GM12878 (cell line): ENCODE measurements at regions of chr20 and their contacts with region 1.

Region 1: GRCh38 chr20:44683263-44684046 is 31.7 kb upstream of the CCN5 start:
- DNase-seq: peak; percentile 45
- ATAC-seq: peak; percentile 96
- H3K4me3 ChIP-seq: no peak overlapping the region
- H3K27ac ChIP-seq: no peak overlapping the region
- H3K4me1 ChIP-seq: peaks cover 6% of the 10 kb centered on the region
- H3K27me3 ChIP-seq: no peaks in the 10 kb centered on the region
- CTCF ChIP-seq: peak; percentile 78 to 91 (median 79); a peak in 5 of 6 replicates
- EP300 ChIP-seq: no peak
- POLR2A ChIP-seq: no peak
- RAD21 ChIP-seq: peak; percentile 92

Region 2: DNA sequence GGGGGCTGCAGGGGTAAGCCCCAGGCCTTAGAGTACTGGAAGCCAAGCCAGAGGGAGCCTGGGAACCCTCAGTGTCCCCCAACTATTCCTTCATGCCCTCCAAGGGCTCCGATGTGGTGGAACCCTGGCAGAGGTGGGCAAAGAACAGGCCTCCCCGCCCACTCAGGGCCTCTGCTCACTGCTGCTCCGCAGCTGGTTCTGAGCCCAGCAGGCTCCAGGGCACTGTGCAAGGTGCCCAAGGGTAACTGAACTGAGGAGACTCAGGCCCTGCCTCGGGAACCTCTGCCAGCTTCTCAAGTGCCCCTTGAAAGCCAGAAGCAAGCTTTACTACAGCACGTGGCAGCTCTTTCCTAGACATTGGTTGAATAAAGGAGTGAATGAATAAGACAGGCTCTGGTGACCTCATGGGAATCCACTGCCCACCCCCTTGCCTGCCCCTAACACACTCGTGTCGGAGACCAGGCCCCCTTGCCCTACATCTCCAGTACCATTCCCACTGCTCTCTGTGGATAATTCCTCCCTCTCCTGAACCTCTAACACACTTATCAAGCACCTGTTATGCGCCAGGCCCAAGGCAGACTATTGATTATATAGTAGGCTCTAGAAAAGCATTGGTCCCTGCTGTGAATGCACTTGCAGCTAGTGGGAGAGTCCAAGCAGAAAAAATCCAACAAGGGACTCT is 713.8 kb before region 1 on chr20:
- CTCF ChIA-PET with region 1: no interaction called
- POLR2A ChIA-PET with region 1: no interaction called
- RAD21 ChIA-PET with region 1: no interaction called
- SMC1A ChIA-PET with region 1: no interaction called
- in situ Hi-C with region 1: no loop called
- intact Hi-C with region 1: no loop called
- DNase-seq: no peak
- ATAC-seq: no peak
- H3K4me3 ChIP-seq: no peak overlapping the region
- H3K27ac ChIP-seq: no peak overlapping the region
- H3K4me1 ChIP-seq: peaks cover 3% of the 10 kb centered on the region
- H3K27me3 ChIP-seq: no peaks in the 10 kb centered on the region
- CTCF ChIP-seq: no peak
- EP300 ChIP-seq: no peak
- POLR2A ChIP-seq: no peak
- RAD21 ChIP-seq: no peak

Region 3: GRCh38 chr20:44475694-44476560 is 207.5 kb before region 1 on chr20 and contains the start of gene TTPAL:
- CTCF ChIA-PET with region 1: interaction called, 11 read pairs
- POLR2A ChIA-PET with region 1: no interaction called
- RAD21 ChIA-PET with region 1: interaction called, 5 read pairs
- SMC1A ChIA-PET with region 1: interaction called, 3 read pairs
- in situ Hi-C with region 1: no loop called
- intact Hi-C with region 1: no loop called
- DNase-seq: peak; percentile 68
- ATAC-seq: peak; percentile 97
- H3K4me3 ChIP-seq: peak within 1 kb of the TSS; percentile 75
- H3K27ac ChIP-seq: peak within 1 kb of the TSS; percentile 90
- H3K4me1 ChIP-seq: no peaks in the 10 kb centered on the region; the same call in 1 of the 2 replicates
- H3K27me3 ChIP-seq: no peaks in the 10 kb centered on the region
- CTCF ChIP-seq: peak; percentile 11 to 60 (median 17); a peak in 3 of 6 replicates
- EP300 ChIP-seq: no peak
- POLR2A ChIP-seq: peak; percentile 100
- RAD21 ChIP-seq: peak; percentile 32; the same call in 1 of the 2 replicates
- polyA plus RNA-seq, gene TTPAL: 4.0 to 4.3 TPM

Region 4: DNA sequence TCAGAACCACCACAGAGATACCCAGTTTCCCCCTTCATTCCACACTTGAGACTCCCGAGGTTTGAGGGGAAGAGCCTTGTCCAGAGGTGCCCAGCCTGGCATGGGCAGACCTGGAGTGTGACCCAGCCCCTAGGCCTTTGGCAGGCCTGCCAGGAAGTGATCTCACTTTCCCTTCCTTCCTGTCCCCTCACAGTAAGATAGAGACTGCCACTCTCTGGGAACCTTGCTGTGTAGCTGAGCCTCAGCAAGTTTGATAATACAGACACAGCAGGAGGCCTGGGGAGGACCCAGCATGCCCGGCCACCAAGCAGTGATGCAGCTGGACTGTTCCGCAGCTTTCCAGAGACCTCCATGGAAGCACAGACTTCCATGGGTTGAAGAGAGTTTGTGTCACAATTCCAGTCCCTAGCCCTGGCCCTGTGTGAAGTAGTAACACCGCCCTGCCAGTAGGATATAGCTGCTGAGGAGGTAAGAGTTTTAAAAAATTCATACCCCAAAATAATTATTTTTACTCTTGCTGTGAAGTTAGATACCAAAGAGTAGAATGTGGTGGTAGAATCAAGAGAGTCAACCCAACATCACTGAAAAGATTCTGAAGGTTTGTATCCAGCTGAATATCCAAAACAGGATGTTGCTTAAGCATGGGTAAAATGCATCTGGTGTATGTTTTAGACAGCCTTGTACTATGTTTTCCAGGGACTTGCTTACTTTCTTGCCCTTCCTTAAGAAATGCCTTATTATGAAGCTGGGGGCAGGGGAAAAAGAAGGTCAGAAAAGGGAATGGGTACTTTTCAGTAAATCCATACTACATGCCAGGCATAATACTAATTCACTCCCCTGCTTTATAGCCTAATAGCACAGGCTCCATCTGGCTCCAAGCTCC is 84.8 kb before region 1 on chr20:
- CTCF ChIA-PET with region 1: interaction called, 18 read pairs
- POLR2A ChIA-PET with region 1: no interaction called
- RAD21 ChIA-PET with region 1: interaction called, 16 read pairs
- SMC1A ChIA-PET with region 1: interaction called, 25 read pairs
- in situ Hi-C with region 1: no loop called
- intact Hi-C with region 1: no loop called
- DNase-seq: no peak
- ATAC-seq: peak; percentile 75
- H3K4me3 ChIP-seq: peak overlapping the region; percentile 28; the same call in 1 of the 2 replicates
- H3K27ac ChIP-seq: peak overlapping the region; percentile 0
- H3K4me1 ChIP-seq: peaks cover 25% of the 10 kb centered on the region
- H3K27me3 ChIP-seq: no peaks in the 10 kb centered on the region
- CTCF ChIP-seq: peak; percentile 12 to 25 (median 17); a peak in 3 of 6 replicates
- EP300 ChIP-seq: no peak
- POLR2A ChIP-seq: peak; percentile 58
- RAD21 ChIP-seq: peak; percentile 46; the same call in 1 of the 2 replicates

Region 5: DNA sequence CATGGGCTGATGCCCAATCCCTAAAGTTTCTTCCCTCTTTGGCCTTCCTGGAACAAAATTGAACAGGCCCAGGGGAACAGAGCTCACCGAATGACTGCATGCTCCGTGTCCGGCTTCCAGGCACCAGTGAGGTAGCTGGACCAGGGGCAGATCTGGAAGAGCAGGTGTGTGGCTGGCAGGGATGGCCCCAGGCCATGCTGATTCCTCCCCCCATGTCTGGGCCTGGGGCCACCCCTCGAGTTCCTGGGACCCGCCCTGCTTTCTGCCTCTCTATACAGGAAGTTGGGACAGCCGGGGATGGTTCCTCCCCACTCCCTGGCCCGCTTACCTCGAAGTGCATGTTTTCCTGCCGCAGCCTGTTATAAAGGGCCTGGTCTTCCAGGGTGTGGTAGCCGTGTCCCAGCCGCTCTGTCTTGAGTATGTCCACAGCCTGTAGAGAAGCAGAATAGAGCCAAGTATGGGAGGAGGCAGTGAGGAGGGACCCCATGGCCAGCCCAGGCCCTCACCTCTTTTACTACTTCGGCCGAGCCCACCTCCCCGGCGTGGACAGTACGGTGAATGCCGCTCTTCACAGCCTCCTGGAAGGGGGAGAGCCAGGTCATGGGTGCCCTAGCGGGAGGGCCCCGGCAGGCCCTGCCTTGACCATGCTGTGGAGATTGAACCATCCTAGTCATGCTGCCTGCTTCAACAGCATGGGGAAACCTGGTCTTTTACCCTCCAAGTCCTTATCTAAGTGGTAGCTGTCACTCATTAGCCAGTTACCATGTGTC is 60.8 kb before region 1 on chr20:
- CTCF ChIA-PET with region 1: interaction called, 57 read pairs
- POLR2A ChIA-PET with region 1: interaction called, 4 read pairs
- RAD21 ChIA-PET with region 1: interaction called, 37 read pairs
- SMC1A ChIA-PET with region 1: interaction called, 33 read pairs
- in situ Hi-C with region 1: no loop called
- intact Hi-C with region 1: no loop called
- DNase-seq: no peak
- ATAC-seq: no peak
- H3K4me3 ChIP-seq: no peak overlapping the region
- H3K27ac ChIP-seq: no peak overlapping the region
- H3K4me1 ChIP-seq: peaks cover 7% of the 10 kb centered on the region
- H3K27me3 ChIP-seq: no peaks in the 10 kb centered on the region
- CTCF ChIP-seq: no peak
- EP300 ChIP-seq: no peak
- POLR2A ChIP-seq: no peak
- RAD21 ChIP-seq: no peak

Region 6: DNA sequence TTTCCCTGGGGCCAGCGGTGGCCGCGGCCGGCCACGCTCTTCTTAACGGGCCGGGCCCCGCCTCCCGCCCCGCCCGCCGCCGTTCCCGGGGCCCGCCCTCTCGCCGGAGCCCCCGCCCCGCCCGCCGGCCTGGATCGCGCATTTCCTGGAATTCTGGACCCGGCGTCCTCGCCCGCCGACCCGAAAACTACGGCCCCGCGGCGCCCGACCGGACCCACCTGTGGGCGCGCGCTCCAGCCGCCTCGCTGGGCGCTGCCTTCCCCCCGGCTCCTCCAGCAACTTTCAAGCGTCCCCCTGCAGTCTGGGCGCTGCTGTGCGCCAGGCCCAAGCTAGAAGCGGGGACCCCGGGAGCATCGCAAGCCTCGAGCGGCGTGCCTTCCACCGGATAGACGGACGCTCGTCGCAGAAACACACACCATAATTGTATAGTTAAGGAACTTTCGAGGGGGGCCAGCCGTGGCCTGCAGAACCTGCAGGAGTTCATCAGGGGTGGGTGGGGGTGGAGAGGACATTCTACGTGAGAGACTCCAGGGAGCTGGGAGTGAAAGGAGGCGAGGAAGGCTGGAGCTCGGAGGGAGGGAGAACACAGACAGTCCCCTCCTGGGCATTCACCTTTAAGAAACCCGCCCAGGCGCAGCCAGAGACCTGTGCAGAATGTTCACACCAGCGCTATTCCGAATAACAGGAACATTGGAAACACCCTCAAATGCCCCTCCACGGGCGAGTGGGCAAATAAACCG is 31.6 kb before region 1 on chr20 and contains the start of gene ADA:
- CTCF ChIA-PET with region 1: interaction called, 134 read pairs
- POLR2A ChIA-PET with region 1: interaction called, 4 read pairs
- RAD21 ChIA-PET with region 1: interaction called, 55 read pairs
- SMC1A ChIA-PET with region 1: interaction called, 71 read pairs
- in situ Hi-C with region 1: no loop called
- intact Hi-C with region 1: loop called (anchors 2 kb)
- DNase-seq: no peak
- ATAC-seq: peak; percentile 66
- H3K4me3 ChIP-seq: peak within 1 kb of the TSS; percentile 95
- H3K27ac ChIP-seq: peak within 1 kb of the TSS; percentile 84
- H3K4me1 ChIP-seq: peaks cover 39% of the 10 kb centered on the region
- H3K27me3 ChIP-seq: no peaks in the 10 kb centered on the region
- CTCF ChIP-seq: peak in 1 of 3 experiments; percentile 16; a peak in 1 of 6 replicates
- EP300 ChIP-seq: no peak
- POLR2A ChIP-seq: peak; percentile 50; the same call in 1 of the 2 replicates
- RAD21 ChIP-seq: no peak
- polyA plus RNA-seq, gene ADA: 40.9 to 70.6 TPM

Region 7: DNA sequence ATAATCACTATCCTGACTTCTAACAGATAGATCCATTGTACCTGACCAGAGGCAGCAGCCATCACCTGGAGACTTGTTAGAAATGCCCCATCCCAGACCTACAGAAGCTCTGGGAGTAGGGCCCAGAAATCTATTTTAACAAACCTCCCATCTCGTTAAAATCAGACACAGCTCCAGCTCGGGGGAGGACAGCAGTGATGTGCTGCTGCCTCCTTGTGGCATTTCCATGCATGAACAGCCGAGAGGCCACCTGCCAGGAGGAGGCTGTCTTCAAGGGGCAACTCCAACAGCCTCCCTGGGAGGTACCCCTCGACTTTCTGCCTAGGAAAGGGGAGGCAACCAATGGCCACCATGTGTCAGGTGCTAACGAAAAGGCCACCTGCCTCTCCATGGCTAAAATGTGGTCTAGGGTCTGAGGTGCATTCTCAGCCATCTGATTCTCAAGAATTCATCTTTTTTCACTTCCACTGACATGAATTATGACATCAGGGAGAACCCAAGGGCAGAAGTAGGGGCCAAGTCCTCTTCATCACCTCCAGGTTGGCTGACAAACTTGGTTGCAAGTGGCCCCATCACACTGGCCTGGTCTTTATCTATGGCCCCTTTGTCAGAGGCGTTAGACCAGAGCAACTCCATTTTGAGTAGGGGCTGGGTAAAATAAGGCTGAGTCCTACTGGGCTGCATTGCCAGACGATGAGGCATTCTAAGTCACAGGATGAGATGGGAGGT is 50.0 kb after region 1 on chr20:
- CTCF ChIA-PET with region 1: interaction called, 91 read pairs
- POLR2A ChIA-PET with region 1: no interaction called
- RAD21 ChIA-PET with region 1: interaction called, 38 read pairs
- SMC1A ChIA-PET with region 1: interaction called, 25 read pairs
- in situ Hi-C with region 1: loop called (anchors 5 kb)
- intact Hi-C with region 1: loop called (anchors 1 kb)
- DNase-seq: no peak
- ATAC-seq: peak; percentile 91
- H3K4me3 ChIP-seq: no peak overlapping the region
- H3K27ac ChIP-seq: no peak overlapping the region
- H3K4me1 ChIP-seq: peaks cover 7% of the 10 kb centered on the region
- H3K27me3 ChIP-seq: no peaks in the 10 kb centered on the region
- CTCF ChIP-seq: peak; percentile 90 to 96 (median 91); a peak in 5 of 6 replicates
- EP300 ChIP-seq: no peak
- POLR2A ChIP-seq: no peak
- RAD21 ChIP-seq: peak; percentile 83

Region 8: GRCh38 chr20:44866703-44867335 is 183.4 kb after region 1 on chr20:
- CTCF ChIA-PET with region 1: interaction called, 42 read pairs
- POLR2A ChIA-PET with region 1: no interaction called
- RAD21 ChIA-PET with region 1: interaction called, 20 read pairs
- SMC1A ChIA-PET with region 1: interaction called, 10 read pairs
- in situ Hi-C with region 1: loop called (anchors 5 kb)
- intact Hi-C with region 1: loop called (anchors 1 kb)
- DNase-seq: no peak
- ATAC-seq: peak; percentile 29; the same call in 2 of the 3 replicates
- H3K4me3 ChIP-seq: no peak overlapping the region
- H3K27ac ChIP-seq: no peak overlapping the region
- H3K4me1 ChIP-seq: peaks cover 4% of the 10 kb centered on the region
- H3K27me3 ChIP-seq: peaks cover 0 to 3% of the 10 kb centered on the region in 2 experiments; a peak in 1 of 4 replicates
- CTCF ChIP-seq: no peak
- EP300 ChIP-seq: no peak
- POLR2A ChIP-seq: no peak
- RAD21 ChIP-seq: no peak